Activated CD4-positive, alpha-beta T cell treated with anti-CD3 and anti-CD28 coated beads, Interleukin-2, amount 10 ng/mL, durations not matched to agents 7 days and 5 days (primary cell): ENCODE measurements at regions of chr3 and their contacts with region 1.

Region 1: DNA sequence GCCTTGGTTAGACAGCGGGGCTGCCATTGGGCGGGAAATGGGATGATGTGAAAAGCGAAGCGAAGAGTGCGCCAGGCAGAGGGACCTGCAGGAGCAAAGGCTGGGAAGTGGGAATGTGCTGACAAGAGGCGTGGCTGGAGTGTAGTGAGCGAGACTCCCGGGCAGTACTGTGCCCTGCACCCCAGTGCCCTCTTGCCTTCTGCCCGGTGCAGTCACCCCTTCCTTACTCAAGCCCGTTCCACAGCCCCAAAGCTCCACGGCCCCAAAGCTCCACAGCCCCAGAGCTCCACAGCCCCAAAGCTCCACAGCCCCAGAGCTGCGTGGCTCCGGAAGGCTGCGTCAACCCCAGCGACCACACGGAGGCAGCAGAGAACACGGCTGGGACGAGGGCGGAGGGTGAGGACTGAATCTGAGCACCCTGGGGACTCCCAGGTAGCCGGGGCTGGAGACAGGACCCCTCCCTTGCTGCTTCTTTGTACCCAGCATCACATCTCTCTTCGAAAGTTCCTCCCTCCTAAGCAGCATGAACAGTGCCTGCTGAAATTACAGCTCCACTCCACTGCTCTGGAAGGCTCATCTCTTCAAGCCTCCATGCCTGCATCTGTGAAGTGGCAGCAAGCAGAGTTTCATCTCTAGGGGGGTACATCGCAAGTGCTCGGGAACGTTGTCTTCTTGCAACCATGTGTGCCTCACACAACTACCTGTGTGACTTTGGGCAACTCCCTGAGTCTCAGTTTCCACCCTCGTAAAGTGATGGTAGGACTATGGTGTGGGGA is 108.9 kb downstream of the FBLN2 start:
- DNase-seq: peak; percentile 70
- H3K4me3 Mint-ChIP-seq: no peak overlapping the region
- H3K27ac Mint-ChIP-seq: no peak overlapping the region
- H3K4me1 Mint-ChIP-seq: peaks cover 22% of the 10 kb centered on the region
- H3K27me3 Mint-ChIP-seq: peaks cover 26% of the 10 kb centered on the region

Region 2: DNA sequence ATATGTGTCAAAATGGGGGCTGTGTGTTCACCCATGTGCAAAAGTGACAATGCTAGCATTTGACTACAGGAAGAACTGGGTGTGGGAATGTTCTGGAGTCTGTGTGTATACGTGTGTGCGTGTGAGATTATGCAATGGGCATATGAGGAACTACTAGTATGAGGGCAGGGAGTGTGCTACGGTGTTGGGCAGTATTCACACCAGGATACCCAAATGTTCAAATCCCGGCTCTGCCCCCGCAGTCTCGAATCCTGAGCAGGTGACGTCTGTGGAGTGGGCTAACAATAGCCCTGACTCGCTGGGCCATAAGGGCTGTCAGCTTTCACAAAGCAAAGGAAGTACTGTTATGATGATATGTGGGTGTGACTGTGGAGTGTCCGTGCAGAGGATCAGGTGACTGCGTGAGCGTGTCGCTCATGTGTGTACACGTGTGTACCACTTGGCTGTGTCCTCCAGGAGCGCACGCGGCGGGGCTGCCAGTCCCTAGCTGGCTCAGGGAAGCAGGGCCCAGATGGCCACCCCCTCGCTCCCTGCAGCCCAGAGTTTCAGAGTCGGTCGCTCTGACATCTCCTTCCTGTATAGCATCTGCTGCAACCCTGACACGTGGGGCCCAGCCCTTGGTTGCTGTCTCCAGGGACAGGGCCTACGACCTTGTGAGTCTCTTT is 611.8 kb before region 1 on chr3:
- CTCF ChIA-PET with region 1: no interaction called
- POLR2A ChIA-PET with region 1: no interaction called
- DNase-seq: peak; percentile 21
- H3K4me3 Mint-ChIP-seq: no peak overlapping the region
- H3K27ac Mint-ChIP-seq: peak overlapping the region; percentile 2
- H3K4me1 Mint-ChIP-seq: peaks cover 15% of the 10 kb centered on the region
- H3K27me3 Mint-ChIP-seq: no peaks in the 10 kb centered on the region

Region 3: GRCh38 chr3:13594614-13595421 is 63.0 kb before region 1 on chr3:
- CTCF ChIA-PET with region 1: no interaction called
- POLR2A ChIA-PET with region 1: no interaction called
- DNase-seq: no peak
- H3K4me3 Mint-ChIP-seq: no peak overlapping the region
- H3K27ac Mint-ChIP-seq: no peak overlapping the region
- H3K4me1 Mint-ChIP-seq: no peaks in the 10 kb centered on the region
- H3K27me3 Mint-ChIP-seq: peaks cover 5% of the 10 kb centered on the region

Region 4: DNA sequence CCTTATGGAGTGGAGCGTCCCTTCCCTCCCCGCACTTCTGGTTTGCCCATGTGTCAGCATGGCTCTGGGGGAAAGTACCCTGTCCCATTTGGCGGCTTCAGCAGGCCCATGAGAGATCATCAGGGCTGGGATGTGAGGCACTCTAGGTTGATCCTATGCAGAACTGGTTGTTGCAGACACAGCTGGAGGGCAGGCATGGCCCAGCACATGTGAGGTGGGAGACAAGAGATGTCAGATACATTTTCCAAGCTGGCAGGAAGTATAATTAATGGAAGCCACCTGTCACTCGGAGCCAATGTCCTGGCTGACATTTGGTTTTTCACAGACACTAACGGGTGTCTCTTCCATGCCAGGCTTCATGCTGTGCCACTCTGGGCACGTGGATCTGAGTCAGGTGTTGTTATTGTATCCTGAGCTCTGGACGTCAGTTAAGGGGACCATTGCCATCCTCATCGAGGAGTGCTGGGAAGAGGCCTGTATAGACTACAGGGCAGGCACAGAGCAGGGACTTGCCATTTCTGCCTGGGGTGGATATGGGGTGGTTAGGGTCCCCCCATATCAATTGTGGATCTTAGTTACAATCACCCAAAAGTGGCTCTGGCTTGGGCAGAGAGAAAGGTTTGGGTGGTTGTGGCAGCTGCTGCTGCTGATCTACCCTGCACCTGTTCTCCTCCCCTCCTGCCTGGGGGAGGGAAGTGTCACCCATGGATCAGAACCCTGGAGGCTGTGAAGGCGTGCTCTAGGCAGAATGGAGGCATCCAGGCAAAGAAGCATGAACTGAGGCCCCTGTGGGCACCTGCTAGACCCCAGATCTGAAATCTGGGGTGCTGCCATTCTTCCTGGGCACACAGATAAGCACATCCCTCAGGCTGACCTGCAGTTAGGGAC is 31.8 kb after region 1 on chr3:
- CTCF ChIA-PET with region 1: no interaction called
- POLR2A ChIA-PET with region 1: no interaction called
- DNase-seq: no peak
- H3K4me3 Mint-ChIP-seq: no peak overlapping the region
- H3K27ac Mint-ChIP-seq: no peak overlapping the region
- H3K4me1 Mint-ChIP-seq: no peaks in the 10 kb centered on the region
- H3K27me3 Mint-ChIP-seq: no peaks in the 10 kb centered on the region

Region 5: DNA sequence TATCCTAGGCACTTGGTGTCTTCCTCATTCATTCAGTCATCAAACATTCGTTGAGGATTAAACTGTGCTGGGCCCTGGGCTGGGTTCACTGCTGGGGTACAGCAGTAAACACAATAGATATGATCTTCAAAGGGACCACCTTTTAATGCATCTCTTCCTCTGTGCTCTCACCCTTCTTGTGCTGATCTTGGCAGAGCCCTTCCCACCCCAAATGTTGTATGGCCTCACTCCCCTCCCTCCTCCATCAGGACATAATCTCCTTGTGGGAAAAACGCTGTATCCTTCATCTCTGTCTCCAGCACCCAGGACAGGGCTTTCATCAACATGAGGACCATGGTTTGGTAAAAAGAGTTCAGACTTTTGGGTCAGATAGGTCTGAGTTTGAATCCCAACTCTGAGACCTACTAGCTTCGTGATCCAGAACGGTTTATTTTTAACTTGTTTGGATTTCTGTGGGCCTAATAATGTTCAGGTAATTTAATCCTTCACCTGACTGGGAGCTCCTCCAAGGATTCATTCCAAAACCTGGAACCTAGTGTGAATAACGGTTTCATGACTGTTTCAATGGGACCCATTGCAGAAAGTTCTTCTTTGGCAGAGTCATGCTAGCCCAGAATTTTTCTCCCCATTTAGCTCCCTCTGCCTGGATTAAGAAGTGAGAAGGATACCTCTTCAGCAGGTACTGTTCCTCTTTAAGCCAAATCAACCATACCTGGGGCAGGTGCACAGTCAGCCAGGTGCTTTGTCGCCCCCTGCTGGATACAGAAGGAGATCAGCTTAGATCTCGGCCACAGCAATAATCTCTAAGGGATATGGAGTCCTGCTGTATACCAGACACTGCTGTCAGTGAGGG is 227.2 kb after region 1 on chr3:
- CTCF ChIA-PET with region 1: interaction called, 25 read pairs
- POLR2A ChIA-PET with region 1: no interaction called
- DNase-seq: peak; percentile 82
- H3K4me3 Mint-ChIP-seq: no peak overlapping the region
- H3K27ac Mint-ChIP-seq: no peak overlapping the region
- H3K4me1 Mint-ChIP-seq: peaks cover 20% of the 10 kb centered on the region
- H3K27me3 Mint-ChIP-seq: peaks cover 40% of the 10 kb centered on the region